ENCODE measurements at regions of chr1 and their contacts with region 1.

Region 1: GRCh38 chr1:153670859-153671627 is at the start of gene ILF2:
- DNase-seq: peak; percentile 91
- ATAC-seq: peak; percentile 92
- H3K4me3 Mint-ChIP-seq: no peak within 1 kb of the TSS
- H3K27ac Mint-ChIP-seq: peak within 1 kb of the TSS; percentile 85
- H3K4me1 Mint-ChIP-seq: peaks cover 23% of the 10 kb centered on the region
- H3K27me3 Mint-ChIP-seq: no peaks in the 10 kb centered on the region
- total RNA-seq, gene ILF2: 141 to 142 TPM

Region 2: DNA sequence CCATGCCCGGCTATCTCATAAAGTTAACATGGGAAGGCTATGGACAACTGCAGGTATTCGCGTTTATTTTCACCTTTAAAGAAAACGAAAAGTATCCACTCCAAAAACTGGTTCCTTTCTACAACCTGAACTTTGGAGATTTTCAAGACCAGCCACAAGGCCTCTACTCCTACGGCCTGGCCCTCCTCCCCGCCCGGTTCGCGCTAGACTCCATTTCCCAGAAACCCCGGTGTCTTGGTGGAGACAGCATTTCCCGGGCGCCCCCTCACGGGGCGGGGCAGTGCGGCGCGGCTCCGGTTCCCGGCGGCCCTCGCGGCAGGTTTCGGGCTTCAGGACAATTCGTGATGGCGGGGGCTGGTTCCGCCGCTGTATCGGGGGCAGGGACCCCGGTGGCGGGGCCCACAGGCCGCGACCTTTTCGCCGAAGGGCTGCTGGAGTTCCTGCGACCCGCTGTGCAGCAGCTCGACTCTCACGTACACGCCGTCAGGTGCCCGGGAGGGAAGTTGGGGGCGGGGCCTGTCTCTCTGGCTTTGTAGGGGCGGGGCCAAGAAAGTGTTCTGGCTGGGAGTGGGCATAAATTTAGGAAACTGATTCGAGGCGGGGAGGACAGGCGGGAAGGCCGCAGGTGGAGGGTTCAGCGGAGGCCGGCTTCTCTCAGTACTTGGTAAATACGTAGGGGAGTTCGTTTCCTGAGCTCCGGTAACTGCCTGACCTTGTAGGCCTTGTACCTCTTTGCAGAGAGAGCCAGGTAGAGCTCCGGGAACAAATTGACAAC is 12.5 kb before region 1 on chr1 and contains the start of gene SNAPIN:
- POLR2A ChIA-PET with region 1: interaction called, 13 read pairs
- DNase-seq: peak; percentile 95
- ATAC-seq: peak; percentile 100
- H3K4me3 Mint-ChIP-seq: peak within 1 kb of the TSS; percentile 95
- H3K27ac Mint-ChIP-seq: peak within 1 kb of the TSS; percentile 89
- H3K4me1 Mint-ChIP-seq: peaks cover 18% of the 10 kb centered on the region
- H3K27me3 Mint-ChIP-seq: no peaks in the 10 kb centered on the region
- total RNA-seq, gene SNAPIN: 37.9 TPM